OCI-LY7 (cell line): ENCODE measurements at regions of chr1 and their contacts with region 1.

Region 1: GRCh38 chr1:246506674-246507481 is at the start of gene SMYD3:
- DNase-seq: peak; percentile 89
- H3K4me3 ChIP-seq: peak within 1 kb of the TSS; percentile 95
- H3K27ac ChIP-seq: no peak within 1 kb of the TSS
- H3K4me1 ChIP-seq: peaks cover 13% of the 10 kb centered on the region
- CTCF ChIP-seq: peak; percentile 31; the same call in 1 of the 2 replicates
- total RNA-seq, gene SMYD3: 26.6 and 28.9 TPM in 2 replicates

Region 2: GRCh38 chr1:247078261-247079140 is 571.6 kb after region 1 on chr1 and contains the start of gene ZNF670:
- CTCF ChIA-PET with region 1: no interaction called
- POLR2A ChIA-PET with region 1: no interaction called
- intact Hi-C with region 1: loop called (anchors 5 kb)
- DNase-seq: peak; percentile 97
- H3K4me3 ChIP-seq: peak within 1 kb of the TSS; percentile 85
- H3K27ac ChIP-seq: peak within 1 kb of the TSS; percentile 46
- H3K4me1 ChIP-seq: peaks cover 18% of the 10 kb centered on the region
- CTCF ChIP-seq: peak; percentile 65
- total RNA-seq, gene ZNF670: 5.5 and 5.8 TPM in 2 replicates